Activated CD4-positive, alpha-beta T cell treated with anti-CD3 and anti-CD28 coated beads, Interleukin-2, amount 10 ng/mL, durations not matched to agents 24 days and 14 days (primary cell): ENCODE measurements at regions of chr20 and their contacts with region 1.

Region 1: GRCh38 chr20:44885392-44886265 is at the start of gene YWHAB:
- DNase-seq: peak; percentile 99
- H3K4me3 Mint-ChIP-seq: peak within 1 kb of the TSS; percentile 97
- H3K27ac Mint-ChIP-seq: peak within 1 kb of the TSS; percentile 94
- H3K4me1 Mint-ChIP-seq: peaks cover 48% of the 10 kb centered on the region
- H3K27me3 Mint-ChIP-seq: no peaks in the 10 kb centered on the region
- total RNA-seq, gene YWHAB: 241 and 243 TPM in 2 replicates

Region 2: DNA sequence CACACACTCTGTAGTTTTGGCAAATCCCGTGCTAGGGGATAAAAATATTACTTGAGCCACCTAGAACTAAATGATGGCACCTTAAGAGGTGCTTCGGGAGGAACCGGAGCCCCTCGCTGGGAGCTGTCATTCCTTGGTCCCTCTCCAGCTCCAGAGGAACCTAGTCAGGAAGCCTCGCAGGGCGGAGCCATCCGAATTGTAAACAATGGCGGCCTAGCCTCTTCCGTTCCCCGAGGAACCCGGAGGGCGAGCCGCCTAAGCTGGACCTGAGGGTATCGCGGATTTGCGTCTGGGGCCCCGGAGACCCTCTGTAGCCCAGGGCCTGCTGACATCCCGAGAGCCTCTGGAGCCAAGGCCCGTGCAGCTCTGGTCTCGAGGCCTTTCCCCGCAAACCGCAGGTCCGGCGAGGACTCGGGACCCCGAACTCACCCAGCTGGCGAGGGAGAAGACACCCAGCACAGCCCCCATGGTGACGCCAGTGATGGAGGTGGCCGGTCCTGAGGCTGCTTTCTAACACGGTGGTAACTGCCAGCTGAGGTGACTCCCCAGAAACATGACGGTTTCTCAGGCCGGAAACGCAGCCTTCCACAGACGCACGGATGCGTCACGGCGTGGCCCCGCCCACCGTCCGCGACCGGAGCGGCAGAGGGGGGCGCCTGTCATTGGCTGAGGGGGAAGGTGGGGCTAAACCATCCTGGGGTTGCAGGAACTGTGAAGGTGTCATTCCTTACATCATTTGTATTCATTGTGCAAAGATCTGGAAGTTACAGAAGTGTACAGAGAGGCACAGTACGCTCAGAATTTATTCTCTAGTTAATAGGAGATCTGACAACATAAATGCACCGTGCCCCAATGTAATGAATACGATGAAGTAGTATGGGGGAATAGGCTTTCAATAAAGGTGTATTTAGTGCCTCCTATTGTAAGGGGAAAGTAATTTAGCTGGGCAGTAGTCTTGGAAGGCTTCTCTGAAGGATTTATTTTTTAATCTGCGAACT is 363.8 kb before region 1 on chr20 and contains the start of gene SERINC3:
- intact Hi-C with region 1: loop called (anchors 10 kb)
- DNase-seq: peak; percentile 99
- H3K4me3 Mint-ChIP-seq: peak within 1 kb of the TSS; percentile 86
- H3K27ac Mint-ChIP-seq: peak within 1 kb of the TSS; percentile 86
- H3K4me1 Mint-ChIP-seq: peaks cover 29% of the 10 kb centered on the region
- H3K27me3 Mint-ChIP-seq: no peaks in the 10 kb centered on the region
- total RNA-seq, gene SERINC3: 47.1 and 49.6 TPM in 2 replicates

Region 3: DNA sequence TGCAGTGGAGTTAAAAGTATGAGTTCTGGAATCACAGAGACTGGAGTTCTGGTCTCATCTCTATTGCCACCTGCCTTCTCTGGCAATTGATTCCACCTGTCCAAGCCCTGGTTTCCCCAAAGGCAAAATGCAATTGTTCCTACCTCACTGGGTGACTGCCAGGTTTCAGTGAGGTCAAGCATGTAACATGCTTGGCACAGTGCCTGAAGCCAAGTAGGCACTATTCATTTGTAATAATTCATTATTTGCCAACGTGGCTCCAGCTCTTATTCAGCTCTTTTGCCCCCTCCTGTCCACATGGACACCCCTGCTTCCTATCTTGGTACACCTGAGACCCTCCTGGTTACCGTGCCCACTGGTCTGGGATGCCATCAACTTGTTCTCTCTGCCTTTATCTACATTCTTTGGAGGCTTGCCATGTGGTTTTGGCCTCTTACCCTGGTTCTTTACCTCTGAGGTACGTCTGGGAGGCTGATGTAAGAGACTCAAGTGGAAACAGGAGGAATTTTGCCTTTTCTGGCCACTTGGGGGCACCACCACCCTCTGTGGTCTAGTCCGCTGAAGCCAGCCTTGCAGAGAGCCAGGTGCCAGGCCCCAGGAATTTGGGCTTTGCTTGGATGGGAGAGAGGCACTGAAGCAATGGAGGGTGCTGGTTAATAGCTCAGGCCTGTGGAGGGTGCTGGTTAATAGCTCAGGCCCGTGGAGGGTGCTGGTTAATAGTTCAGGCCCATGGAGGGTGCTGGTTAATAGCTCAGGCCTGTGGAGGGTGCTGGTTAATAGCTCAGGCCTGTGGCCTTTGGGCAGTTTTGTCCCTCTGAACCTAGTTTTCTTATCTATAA is 138.2 kb before region 1 on chr20:
- intact Hi-C with region 1: loop called (anchors 5 kb)
- DNase-seq: peak; percentile 87
- H3K4me3 Mint-ChIP-seq: peak overlapping the region; percentile 7
- H3K27ac Mint-ChIP-seq: peak overlapping the region; percentile 34
- H3K4me1 Mint-ChIP-seq: peaks cover 9% of the 10 kb centered on the region
- H3K27me3 Mint-ChIP-seq: peaks cover 30% of the 10 kb centered on the region

Region 4: GRCh38 chr20:44909872-44910689 is 24.5 kb after region 1 on chr20 and contains the start of gene PABPC1L:
- intact Hi-C with region 1: loop called (anchors 1 kb)
- DNase-seq: peak; percentile 94
- H3K4me3 Mint-ChIP-seq: peak within 1 kb of the TSS; percentile 91
- H3K27ac Mint-ChIP-seq: peak within 1 kb of the TSS; percentile 82
- H3K4me1 Mint-ChIP-seq: peaks cover 35% of the 10 kb centered on the region
- H3K27me3 Mint-ChIP-seq: no peaks in the 10 kb centered on the region
- total RNA-seq, gene PABPC1L: 96.9 and 103 TPM in 2 replicates